ENCODE measurements at regions of chr6 and their contacts with region 1.

Region 1: DNA sequence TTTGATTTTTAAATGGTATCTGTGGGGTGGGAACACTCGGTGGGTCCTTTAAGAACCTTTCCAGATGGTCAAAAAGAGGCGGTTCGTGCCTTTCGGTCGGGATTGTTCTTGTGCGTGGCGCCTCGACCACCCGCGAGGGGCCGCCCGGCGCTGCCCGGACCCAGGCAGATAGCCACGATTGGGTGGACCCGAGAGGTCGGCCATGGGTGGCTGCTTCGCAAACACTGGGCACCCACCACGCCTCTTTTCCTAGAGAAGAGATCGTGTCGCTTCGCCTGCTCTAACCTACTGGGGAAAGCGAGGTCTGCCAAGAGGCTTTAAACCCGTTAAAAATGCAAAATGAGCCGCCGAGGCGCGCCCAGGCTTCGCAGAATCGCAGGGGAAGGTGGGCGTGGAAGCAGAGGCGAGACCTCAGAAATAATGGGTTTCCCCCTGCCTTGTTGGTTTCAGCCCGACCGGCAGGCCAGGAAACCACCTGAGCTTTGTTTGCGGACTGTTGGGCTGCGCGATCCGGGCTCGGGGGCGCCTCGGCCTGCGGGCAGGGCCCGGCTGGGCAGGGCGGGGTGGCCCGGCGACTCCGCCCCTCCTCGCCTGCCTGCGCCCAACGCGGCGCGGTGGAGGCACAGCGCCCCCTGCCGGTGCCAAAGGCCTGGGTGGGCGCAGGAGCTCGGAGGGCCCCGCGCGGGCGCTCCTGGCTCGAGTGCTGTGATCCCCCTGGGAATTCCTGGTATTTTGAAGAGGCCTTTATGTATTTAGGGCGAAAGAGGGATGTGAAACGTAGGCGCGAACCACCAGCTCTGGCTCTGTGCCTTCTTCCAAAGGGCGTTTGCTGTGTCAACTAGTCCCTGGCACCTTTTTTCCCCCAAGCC is 1.6 kb downstream of the MARCKS start:
- DNase-seq: peak; percentile 92
- H3K4me3 ChIP-seq: peak overlapping the region; percentile 81 to 100 (median 100)
- H3K27ac ChIP-seq: peak overlapping the region; percentile 100
- H3K4me1 ChIP-seq: peaks cover 30% of the 10 kb centered on the region
- H3K27me3 ChIP-seq: no peaks in the 10 kb centered on the region
- CTCF ChIP-seq: peak; percentile 82 to 98
- POLR2A ChIP-seq: peak; percentile 85

Region 2: DNA sequence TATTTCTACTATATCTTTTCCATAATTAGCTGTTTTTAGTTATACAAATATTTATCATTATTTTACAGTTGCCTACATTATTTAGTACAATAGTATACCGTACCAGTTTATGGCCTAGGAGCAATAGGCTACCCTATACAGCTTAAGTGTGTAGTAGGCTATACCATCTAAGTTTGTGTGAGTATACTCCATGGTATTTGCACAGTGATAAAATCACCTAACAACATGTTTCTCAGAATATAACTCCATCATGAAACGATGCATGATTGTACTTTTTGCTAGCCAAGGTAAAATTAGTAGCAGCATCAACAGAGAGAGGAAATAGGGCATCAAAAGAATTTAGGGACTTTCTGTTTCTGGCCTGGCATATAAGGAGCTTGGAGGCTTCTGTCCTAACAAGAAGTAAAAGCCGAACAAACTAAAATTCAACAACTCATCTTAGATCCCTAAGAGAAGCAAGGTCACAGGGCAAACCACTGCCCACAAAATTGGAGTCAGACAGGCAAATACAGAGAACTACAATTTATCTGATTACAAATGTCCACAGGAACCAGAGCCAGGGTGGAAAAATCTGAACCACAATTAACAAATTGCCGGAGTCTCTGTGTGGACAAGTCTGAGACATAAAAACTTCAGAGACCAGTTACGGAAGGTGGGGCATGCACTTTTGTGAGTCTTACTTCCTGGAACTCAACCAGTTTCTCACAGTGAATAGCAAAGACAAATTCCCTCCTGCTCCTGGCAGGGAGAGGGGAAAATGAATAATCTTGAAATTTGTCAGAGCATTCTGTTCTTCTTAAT is 840.2 kb before region 1 on chr6:
- CTCF ChIA-PET with region 1: interaction called, 3 read pairs
- POLR2A ChIA-PET with region 1: no interaction called
- dilution Hi-C with region 1: no loop called
- intact Hi-C with region 1: loop called (anchors 2 kb)
- DNase-seq: peak; percentile 96
- H3K4me3 ChIP-seq: peak overlapping the region in 1 of 3 experiments; percentile 5
- H3K27ac ChIP-seq: peak overlapping the region; percentile 96
- H3K4me1 ChIP-seq: peaks cover 24% of the 10 kb centered on the region
- H3K27me3 ChIP-seq: no peaks in the 10 kb centered on the region
- CTCF ChIP-seq: no peak
- POLR2A ChIP-seq: no peak

Region 3: GRCh38 chr6:113137426-113137825 is 721.3 kb before region 1 on chr6:
- CTCF ChIA-PET with region 1: interaction called, 11 read pairs
- POLR2A ChIA-PET with region 1: interaction called, 4 read pairs
- dilution Hi-C with region 1: no loop called
- intact Hi-C with region 1: loop called (anchors 5 kb)
- DNase-seq: peak; percentile 96
- H3K4me3 ChIP-seq: peak overlapping the region in 1 of 3 experiments; percentile 3
- H3K27ac ChIP-seq: peak overlapping the region; percentile 69
- H3K4me1 ChIP-seq: peaks cover 29% of the 10 kb centered on the region
- H3K27me3 ChIP-seq: no peaks in the 10 kb centered on the region
- CTCF ChIP-seq: no peak
- POLR2A ChIP-seq: no peak

Region 4: GRCh38 chr6:113385020-113385431 is 473.7 kb before region 1 on chr6:
- CTCF ChIA-PET with region 1: interaction called, 10 read pairs
- POLR2A ChIA-PET with region 1: no interaction called
- dilution Hi-C with region 1: no loop called
- intact Hi-C with region 1: no loop called
- DNase-seq: peak; percentile 26
- H3K4me3 ChIP-seq: no peak overlapping the region
- H3K27ac ChIP-seq: no peak overlapping the region
- H3K4me1 ChIP-seq: peaks cover 10% of the 10 kb centered on the region
- H3K27me3 ChIP-seq: no peaks in the 10 kb centered on the region
- CTCF ChIP-seq: no peak
- POLR2A ChIP-seq: no peak

Region 5: GRCh38 chr6:113495506-113495905 is 363.2 kb before region 1 on chr6:
- CTCF ChIA-PET with region 1: interaction called, 19 read pairs
- POLR2A ChIA-PET with region 1: interaction called, 4 read pairs
- dilution Hi-C with region 1: no loop called
- intact Hi-C with region 1: loop called (anchors 1 kb)
- DNase-seq: peak; percentile 91
- H3K4me3 ChIP-seq: no peak overlapping the region
- H3K27ac ChIP-seq: peak overlapping the region; percentile 100
- H3K4me1 ChIP-seq: peaks cover 33% of the 10 kb centered on the region
- H3K27me3 ChIP-seq: no peaks in the 10 kb centered on the region
- CTCF ChIP-seq: no peak
- POLR2A ChIP-seq: no peak

Region 6: DNA sequence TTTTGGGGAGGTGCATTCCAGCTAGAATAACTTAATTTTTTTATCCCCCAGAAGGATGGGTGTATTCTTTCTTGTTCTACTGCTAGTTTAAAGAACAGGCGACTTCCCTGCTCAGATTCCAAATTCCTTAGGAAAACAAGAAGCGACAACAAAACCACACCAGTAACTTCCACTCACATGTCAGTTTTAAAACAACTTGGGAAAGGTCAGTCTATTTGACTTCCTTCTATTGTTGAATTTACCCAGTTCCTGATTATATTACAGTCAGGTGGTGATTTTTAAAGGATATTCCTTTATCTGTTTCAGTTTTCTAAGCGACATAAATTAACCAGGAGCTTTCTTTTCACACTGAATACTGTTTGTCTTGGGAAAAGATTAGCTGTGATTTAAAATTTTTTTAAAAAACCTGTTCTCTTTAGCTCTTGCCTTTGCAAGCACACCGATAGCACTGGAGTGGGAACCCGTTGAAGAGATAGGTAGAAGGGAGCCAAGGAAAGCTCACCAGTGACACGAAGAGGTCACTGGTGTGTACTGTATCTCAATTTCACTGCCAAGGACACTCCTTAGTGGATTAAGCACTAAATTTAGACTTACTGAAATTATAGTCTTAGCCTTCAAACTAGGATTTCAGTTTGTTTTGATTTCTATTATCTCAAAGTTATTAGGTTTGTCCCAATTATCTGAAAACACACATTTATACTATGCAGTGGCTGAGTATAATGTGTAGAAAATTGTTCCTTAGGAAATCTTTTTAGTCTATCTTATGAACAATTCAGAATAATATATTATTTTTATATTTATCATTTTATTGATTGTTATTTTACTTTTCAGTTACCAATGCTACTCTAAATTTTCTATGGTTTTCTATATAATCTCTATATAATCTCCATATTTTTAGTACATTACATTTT is 20.7 kb after region 1 on chr6:
- CTCF ChIA-PET with region 1: interaction called, 58 read pairs
- POLR2A ChIA-PET with region 1: no interaction called
- dilution Hi-C with region 1: no loop called
- intact Hi-C with region 1: loop called (anchors 1 kb)
- DNase-seq: peak; percentile 91
- H3K4me3 ChIP-seq: peak overlapping the region in 1 of 3 experiments; percentile 69
- H3K27ac ChIP-seq: peak overlapping the region; percentile 63
- H3K4me1 ChIP-seq: peaks cover 9% of the 10 kb centered on the region
- H3K27me3 ChIP-seq: no peaks in the 10 kb centered on the region
- CTCF ChIP-seq: peak; percentile 68
- POLR2A ChIP-seq: no peak

Region 7: GRCh38 chr6:113894712-113895674 is 36.3 kb after region 1 on chr6:
- CTCF ChIA-PET with region 1: no interaction called
- POLR2A ChIA-PET with region 1: no interaction called
- dilution Hi-C with region 1: no loop called
- intact Hi-C with region 1: no loop called
- DNase-seq: no peak
- H3K4me3 ChIP-seq: no peak overlapping the region
- H3K27ac ChIP-seq: no peak overlapping the region
- H3K4me1 ChIP-seq: peaks cover 6% of the 10 kb centered on the region
- H3K27me3 ChIP-seq: no peaks in the 10 kb centered on the region
- CTCF ChIP-seq: no peak
- POLR2A ChIP-seq: no peak

Measured in endothelial cell of umbilical vein (primary cell).